ENCODE measurements at regions of chr15 and their contacts with region 1.

Region 1: GRCh38 chr15:31326156-31326732 is 391 bp upstream of the KLF13 start:
- DNase-seq: peak; percentile 99 to 100
- ATAC-seq: peak; percentile 73 to 91 (median 75)
- H3K4me3 ChIP-seq: peak overlapping the region; percentile 44
- H3K4me3 Mint-ChIP-seq: peak overlapping the region; percentile 87
- H3K27ac ChIP-seq: peak overlapping the region; percentile 88
- H3K27ac Mint-ChIP-seq: peak overlapping the region; percentile 80 to 93
- H3K4me1 ChIP-seq: peaks cover 38% of the 10 kb centered on the region
- H3K4me1 Mint-ChIP-seq: peaks cover 51% of the 10 kb centered on the region in 2 donors
- H3K27me3 ChIP-seq: no peaks in the 10 kb centered on the region
- H3K27me3 Mint-ChIP-seq: no peaks in the 10 kb centered on the region
- CTCF ChIP-seq: no peak

Region 2: GRCh38 chr15:31215490-31216214 is 110.6 kb before region 1 on chr15:
- intact Hi-C with region 1: loop called (anchors 10 kb)
- DNase-seq: peak; percentile 68 to 84
- ATAC-seq: peak; percentile 82 to 87 (median 85)
- H3K4me3 ChIP-seq: peak overlapping the region; percentile 27
- H3K4me3 Mint-ChIP-seq: peak overlapping the region; percentile 87
- H3K27ac ChIP-seq: peak overlapping the region; percentile 87
- H3K27ac Mint-ChIP-seq: peak overlapping the region; percentile 66 to 87
- H3K4me1 ChIP-seq: peaks cover 23% of the 10 kb centered on the region
- H3K4me1 Mint-ChIP-seq: peaks cover 12 to 35% of the 10 kb centered on the region in 2 donors
- H3K27me3 ChIP-seq: no peaks in the 10 kb centered on the region
- H3K27me3 Mint-ChIP-seq: no peaks in the 10 kb centered on the region
- CTCF ChIP-seq: peak; percentile 78

Region 3: DNA sequence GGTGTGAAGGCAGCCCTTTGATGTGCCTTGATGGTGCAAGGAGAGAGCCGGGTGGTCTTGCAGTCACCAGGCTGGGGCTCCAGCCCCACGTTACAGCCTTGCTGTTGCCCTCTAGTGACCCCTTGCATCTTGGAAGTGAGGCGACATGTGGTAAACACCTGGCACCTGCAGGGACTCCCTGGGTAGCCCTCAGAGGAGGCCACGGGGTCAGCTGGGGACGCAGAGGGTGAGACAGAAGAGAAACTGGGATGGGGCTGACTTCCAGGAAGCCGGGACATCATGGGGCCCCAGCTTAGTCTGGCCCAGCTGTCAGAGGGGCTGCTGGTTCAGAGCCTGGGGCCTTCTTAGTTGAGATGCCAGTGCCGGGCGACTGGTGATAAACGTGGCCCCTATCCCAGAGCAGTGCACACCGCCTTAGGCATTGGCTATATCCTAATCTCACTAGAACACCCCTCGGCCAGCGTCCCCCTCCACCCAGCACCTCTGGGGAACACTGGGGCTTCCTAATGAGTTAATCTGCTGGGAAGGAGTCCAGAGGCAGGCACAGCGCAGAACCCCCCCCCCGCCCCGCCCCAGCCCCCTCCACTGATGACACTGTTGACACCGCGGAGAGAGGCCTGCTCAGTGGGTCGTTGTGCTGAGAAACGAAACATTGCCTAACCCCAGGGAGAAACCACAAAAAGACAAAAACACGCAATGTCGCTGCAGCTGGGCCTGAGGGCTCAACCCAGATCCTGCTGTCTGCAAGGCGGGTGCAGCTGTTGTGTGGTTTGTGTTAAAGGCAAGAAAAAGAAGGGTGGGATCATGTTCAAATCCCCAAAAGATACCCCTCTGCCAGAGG is 60.2 kb before region 1 on chr15:
- intact Hi-C with region 1: loop called (anchors 10 kb)
- DNase-seq: peak; percentile 47 to 88
- ATAC-seq: peak; percentile 74 to 83 (median 79)
- H3K4me3 ChIP-seq: no peak overlapping the region
- H3K4me3 Mint-ChIP-seq: peak overlapping the region; percentile 69
- H3K27ac ChIP-seq: peak overlapping the region; percentile 76
- H3K27ac Mint-ChIP-seq: peak overlapping the region; percentile 87 to 94
- H3K4me1 ChIP-seq: peaks cover 72% of the 10 kb centered on the region
- H3K4me1 Mint-ChIP-seq: peaks cover 58 to 78% of the 10 kb centered on the region in 2 donors
- H3K27me3 ChIP-seq: no peaks in the 10 kb centered on the region
- H3K27me3 Mint-ChIP-seq: no peaks in the 10 kb centered on the region
- CTCF ChIP-seq: no peak

Region 4: GRCh38 chr15:31338879-31339557 is 12.8 kb after region 1 on chr15:
- intact Hi-C with region 1: loop called (anchors 2 kb)
- DNase-seq: peak in 1 of 2 donors; percentile 55
- ATAC-seq: peak; percentile 32 to 48 (median 41)
- H3K4me3 ChIP-seq: no peak overlapping the region
- H3K4me3 Mint-ChIP-seq: peak overlapping the region; percentile 59
- H3K27ac ChIP-seq: peak overlapping the region; percentile 57
- H3K27ac Mint-ChIP-seq: peak overlapping the region; percentile 88 to 96
- H3K4me1 ChIP-seq: peaks cover 99% of the 10 kb centered on the region
- H3K4me1 Mint-ChIP-seq: peaks cover 90 to 100% of the 10 kb centered on the region in 2 donors
- H3K27me3 ChIP-seq: no peaks in the 10 kb centered on the region
- H3K27me3 Mint-ChIP-seq: no peaks in the 10 kb centered on the region
- CTCF ChIP-seq: no peak